ENCODE measurements at regions of chr5 and their contacts with region 1.

Region 1: DNA sequence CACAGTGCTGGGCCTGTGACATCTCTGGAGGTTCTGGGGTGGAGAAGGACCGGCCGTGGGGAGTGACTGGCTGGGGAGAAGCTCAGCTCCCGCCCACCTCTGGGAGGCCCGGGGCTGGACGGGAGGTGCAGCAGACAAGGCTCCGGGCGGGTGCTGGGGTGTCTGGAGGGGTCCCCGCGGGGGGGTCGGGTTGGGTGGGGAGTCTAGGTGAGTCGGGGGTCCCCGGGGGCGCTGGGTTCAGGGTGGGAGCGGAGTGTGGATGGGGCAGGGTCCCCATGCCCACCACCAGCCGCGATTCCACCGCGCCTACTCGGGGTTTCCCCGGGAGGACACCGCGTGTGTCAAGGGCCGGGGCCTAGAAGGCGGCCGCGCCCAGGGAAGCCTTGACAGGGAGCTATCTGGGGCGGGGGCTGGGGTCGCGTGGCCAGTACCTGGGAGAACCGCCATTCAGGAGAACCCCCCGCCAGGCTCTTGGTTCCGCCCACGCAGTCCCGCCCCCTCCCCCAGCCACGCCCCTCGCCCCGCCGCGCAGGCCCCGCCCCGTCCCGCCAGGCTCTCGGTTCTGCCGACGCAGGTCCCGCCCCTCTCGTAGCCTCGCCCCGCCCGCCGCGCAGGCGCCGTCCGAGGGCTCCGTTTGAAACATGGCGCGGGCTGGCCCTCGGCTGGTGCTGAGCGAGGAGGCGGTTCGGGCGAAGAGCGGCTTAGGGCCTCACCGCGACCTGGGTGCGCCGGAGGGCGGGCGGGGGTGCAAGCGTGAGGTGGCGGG is at the start of gene CEP72:
- DNase-seq: peak; percentile 94
- H3K4me3 ChIP-seq: peak within 1 kb of the TSS; percentile 60 to 89 (median 79)
- H3K27ac ChIP-seq: peak within 1 kb of the TSS; percentile 44 to 78 (median 72)
- H3K4me1 ChIP-seq: peaks cover 0 to 12% (median 7%) of the 10 kb centered on the region in 4 donors
- H3K27me3 ChIP-seq: peaks cover 3% of the 10 kb centered on the region
- CTCF ChIP-seq: no peak
- EP300 ChIP-seq: no peak
- POLR2A ChIP-seq: no peak
- total RNA-seq, gene CEP72: 2.6 to 9.4 (median 4.2) TPM

Region 2: GRCh38 chr5:646396-647201 is 34.7 kb after region 1 on chr5:
- in situ Hi-C with region 1: no loop called
- intact Hi-C with region 1: loop called (anchors 1 kb)
- DNase-seq: no peak
- H3K4me3 ChIP-seq: no peak overlapping the region
- H3K27ac ChIP-seq: no peak overlapping the region
- H3K4me1 ChIP-seq: no peaks in the 10 kb centered on the region
- H3K27me3 ChIP-seq: no peaks in the 10 kb centered on the region
- CTCF ChIP-seq: no peak
- EP300 ChIP-seq: no peak
- POLR2A ChIP-seq: no peak

Region 3: DNA sequence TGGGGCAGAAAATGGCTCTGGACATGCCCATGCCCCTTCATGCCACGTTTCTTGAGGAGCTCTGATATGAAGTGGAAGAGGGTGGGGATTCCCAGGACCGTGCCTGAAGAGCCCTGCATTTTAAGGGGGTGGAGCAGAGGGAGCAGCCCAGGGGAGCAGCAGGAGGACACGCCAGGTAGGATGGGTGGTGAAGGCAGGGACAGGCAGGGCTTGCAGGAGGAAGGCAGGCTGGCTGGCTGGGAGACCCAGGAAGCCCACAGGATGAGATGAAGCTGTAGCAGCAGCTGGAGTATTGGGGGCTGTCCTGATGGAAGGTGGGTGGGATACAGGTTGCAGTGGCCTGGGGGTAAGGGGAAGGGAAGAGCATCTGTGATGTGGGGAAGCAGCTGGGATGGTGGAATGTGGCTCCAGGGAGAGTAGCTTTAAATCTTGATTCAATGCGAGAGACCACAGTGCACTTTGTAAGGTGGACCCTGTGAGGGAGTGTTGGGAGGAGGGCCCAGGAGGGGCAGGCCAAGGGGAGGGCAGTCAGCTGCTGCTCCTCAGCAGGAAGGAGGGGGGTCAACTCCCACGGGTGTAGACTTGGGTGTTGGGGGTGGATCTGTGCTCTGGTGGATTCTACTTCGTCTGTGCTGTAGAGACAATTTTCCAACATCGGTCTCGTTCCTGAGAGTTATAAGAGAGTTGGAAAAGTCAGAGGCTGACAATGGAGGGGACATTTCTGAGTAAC is 1513.4 kb after region 1 on chr5:
- in situ Hi-C with region 1: no loop called
- intact Hi-C with region 1: no loop called
- DNase-seq: no peak
- H3K4me3 ChIP-seq: no peak overlapping the region
- H3K27ac ChIP-seq: no peak overlapping the region
- H3K4me1 ChIP-seq: no peaks in the 10 kb centered on the region
- H3K27me3 ChIP-seq: no peaks in the 10 kb centered on the region
- CTCF ChIP-seq: no peak
- EP300 ChIP-seq: no peak
- POLR2A ChIP-seq: no peak